ENCODE measurements at regions of chr17 and their contacts with region 1.

Region 1: GRCh38 chr17:7435221-7435675 is at the start of gene TMEM102:
- DNase-seq: peak; percentile 97 to 98 (median 98)
- H3K4me3 ChIP-seq: peak within 1 kb of the TSS; percentile 77 to 95 (median 86)
- H3K4me3 Mint-ChIP-seq: peak within 1 kb of the TSS; percentile 86 to 94
- H3K27ac ChIP-seq: peak within 1 kb of the TSS; percentile 79 to 89
- H3K27ac Mint-ChIP-seq: peak within 1 kb of the TSS; percentile 90 to 97 (median 94)
- H3K4me1 ChIP-seq: peaks cover 46 to 50% of the 10 kb centered on the region in 2 donors
- H3K4me1 Mint-ChIP-seq: peaks cover 43% of the 10 kb centered on the region
- H3K27me3 ChIP-seq: peaks cover 14 to 18% of the 10 kb centered on the region in 2 donors
- H3K27me3 Mint-ChIP-seq: peaks cover 22 to 31% (median 24%) of the 10 kb centered on the region in 3 donors
- CTCF ChIP-seq: no peak
- polyA plus RNA-seq, gene TMEM102: 5.1 to 11.3 (median 9.8) TPM

Region 2: GRCh38 chr17:7367083-7367482 is 68.2 kb before region 1 on chr17:
- intact Hi-C with region 1: no loop called
- DNase-seq: no peak
- H3K4me3 ChIP-seq: no peak overlapping the region
- H3K4me3 Mint-ChIP-seq: no peak overlapping the region
- H3K27ac ChIP-seq: no peak overlapping the region
- H3K27ac Mint-ChIP-seq: no peak overlapping the region
- H3K4me1 ChIP-seq: no peaks in the 10 kb centered on the region
- H3K4me1 Mint-ChIP-seq: peaks cover 2% of the 10 kb centered on the region
- H3K27me3 ChIP-seq: no peaks in the 10 kb centered on the region
- H3K27me3 Mint-ChIP-seq: peaks cover 8 to 15% (median 14%) of the 10 kb centered on the region in 3 donors
- CTCF ChIP-seq: no peak

Region 3: GRCh38 chr17:7379134-7379533 is 56.1 kb before region 1 on chr17:
- intact Hi-C with region 1: no loop called
- DNase-seq: no peak
- H3K4me3 ChIP-seq: no peak overlapping the region
- H3K4me3 Mint-ChIP-seq: no peak overlapping the region
- H3K27ac ChIP-seq: no peak overlapping the region
- H3K27ac Mint-ChIP-seq: no peak overlapping the region
- H3K4me1 ChIP-seq: peaks cover 11 to 18% of the 10 kb centered on the region in 2 donors
- H3K4me1 Mint-ChIP-seq: peaks cover 12% of the 10 kb centered on the region
- H3K27me3 ChIP-seq: peaks cover 34 to 49% of the 10 kb centered on the region in 2 donors
- H3K27me3 Mint-ChIP-seq: peaks cover 46 to 67% (median 54%) of the 10 kb centered on the region in 3 donors
- CTCF ChIP-seq: no peak

Region 4: GRCh38 chr17:7410634-7411426 is 24.4 kb before region 1 on chr17:
- intact Hi-C with region 1: no loop called
- DNase-seq: no peak
- H3K4me3 ChIP-seq: no peak overlapping the region
- H3K4me3 Mint-ChIP-seq: no peak overlapping the region
- H3K27ac ChIP-seq: no peak overlapping the region
- H3K27ac Mint-ChIP-seq: no peak overlapping the region
- H3K4me1 ChIP-seq: no peaks in the 10 kb centered on the region
- H3K4me1 Mint-ChIP-seq: peaks cover 7% of the 10 kb centered on the region
- H3K27me3 ChIP-seq: peaks cover 2 to 27% of the 10 kb centered on the region in 2 donors
- H3K27me3 Mint-ChIP-seq: peaks cover 30 to 43% (median 36%) of the 10 kb centered on the region in 3 donors
- CTCF ChIP-seq: no peak

Region 5: DNA sequence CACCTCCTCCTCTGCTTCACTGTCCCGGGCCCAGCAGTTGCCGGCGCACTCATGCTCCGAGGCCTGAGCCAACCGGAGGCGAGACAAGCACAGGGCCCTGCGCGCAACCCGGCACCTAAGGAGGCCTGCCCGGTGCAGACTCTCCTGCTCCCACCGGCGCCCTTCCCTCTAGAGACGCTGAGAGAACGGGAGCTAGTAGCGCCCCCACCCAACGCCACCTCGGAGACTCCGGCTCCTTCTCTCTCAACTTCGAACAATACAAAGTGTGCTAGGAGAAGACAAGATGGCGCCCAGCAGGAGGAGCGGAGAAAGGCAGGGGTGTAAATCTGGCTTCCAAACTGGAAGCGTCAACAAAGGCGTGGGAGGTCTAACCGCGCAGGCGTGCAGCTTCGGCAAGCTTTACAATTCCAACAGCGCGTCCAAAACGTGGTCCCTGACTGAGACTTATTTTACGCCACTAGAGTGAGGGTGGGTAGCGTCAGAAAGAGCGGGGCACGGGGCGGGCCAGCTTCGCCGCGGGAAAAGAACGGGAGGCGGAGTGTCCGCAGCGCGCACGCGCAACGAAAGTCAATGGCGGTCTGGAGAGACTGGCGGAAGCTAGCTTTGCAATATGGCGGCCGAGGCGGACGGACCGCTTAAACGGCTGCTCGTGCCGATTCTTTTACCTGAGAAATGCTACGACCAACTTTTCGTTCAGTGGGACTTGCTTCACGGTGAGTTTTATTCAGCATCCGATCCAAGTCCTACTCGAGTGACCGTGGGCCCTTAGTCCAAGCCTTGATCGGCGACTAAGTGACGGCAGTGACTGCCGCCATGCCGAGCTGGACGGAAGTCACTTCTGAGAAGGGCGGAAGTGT is 148.2 kb after region 1 on chr17 and contains the start of gene MPDU1:
- intact Hi-C with region 1: loop called in 1 of 2 experiments (anchors 5 kb)
- DNase-seq: peak; percentile 94 to 98 (median 97)
- H3K4me3 ChIP-seq: peak within 1 kb of the TSS; percentile 59 to 98 (median 60)
- H3K4me3 Mint-ChIP-seq: peak within 1 kb of the TSS; percentile 98 to 99
- H3K27ac ChIP-seq: peak within 1 kb of the TSS; percentile 99
- H3K27ac Mint-ChIP-seq: peak within 1 kb of the TSS; percentile 98 to 100 (median 100)
- H3K4me1 ChIP-seq: peaks cover 74 to 91% of the 10 kb centered on the region in 2 donors
- H3K4me1 Mint-ChIP-seq: peaks cover 70% of the 10 kb centered on the region
- H3K27me3 ChIP-seq: no peaks in the 10 kb centered on the region
- H3K27me3 Mint-ChIP-seq: peaks cover 0 to 6% (median 2%) of the 10 kb centered on the region in 3 donors
- CTCF ChIP-seq: no peak
- polyA plus RNA-seq, gene MPDU1: 100 to 107 (median 103) TPM